ENCODE measurements at regions of chr7 and their contacts with region 1.

Region 1: DNA sequence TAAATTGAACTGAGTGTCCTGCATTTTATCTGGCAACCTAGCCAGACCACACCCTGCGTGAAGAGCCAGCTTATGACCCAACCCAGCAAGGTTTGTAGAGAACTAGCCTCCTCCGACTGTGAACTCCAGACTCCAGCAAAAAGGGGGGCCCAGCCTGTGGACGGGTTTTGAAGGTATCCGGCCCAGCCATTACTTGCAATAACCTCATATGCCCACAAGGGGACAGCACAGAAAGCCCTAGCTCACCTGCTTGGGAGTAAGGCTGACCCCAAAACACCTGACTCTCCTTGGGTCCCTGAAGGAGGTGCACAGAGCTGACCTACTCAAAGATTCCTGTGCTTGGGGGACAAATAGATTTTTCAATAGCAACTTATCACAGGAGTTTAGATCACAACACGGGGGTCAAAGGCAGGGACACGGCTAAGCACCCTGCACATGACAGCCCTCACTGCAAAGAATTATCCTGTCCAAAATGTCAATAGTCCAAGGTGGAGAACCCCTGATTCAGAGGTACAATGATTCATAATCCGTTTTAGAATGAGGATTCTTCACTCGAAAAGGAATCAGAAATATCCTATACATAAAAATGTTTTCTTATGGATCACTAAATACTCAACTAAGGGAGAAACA is 4.6 kb downstream of the TRPV6 start:
- DNase-seq: peak; percentile 42
- H3K4me3 ChIP-seq: no peak overlapping the region
- H3K27ac ChIP-seq: no peak overlapping the region
- H3K4me1 ChIP-seq: no peaks in the 10 kb centered on the region
- H3K27me3 ChIP-seq: peaks cover 0 to 2% of the 10 kb centered on the region in 2 experiments
- CTCF ChIP-seq: peak; percentile 76 to 83
- POLR2A ChIP-seq: no peak

Region 2: DNA sequence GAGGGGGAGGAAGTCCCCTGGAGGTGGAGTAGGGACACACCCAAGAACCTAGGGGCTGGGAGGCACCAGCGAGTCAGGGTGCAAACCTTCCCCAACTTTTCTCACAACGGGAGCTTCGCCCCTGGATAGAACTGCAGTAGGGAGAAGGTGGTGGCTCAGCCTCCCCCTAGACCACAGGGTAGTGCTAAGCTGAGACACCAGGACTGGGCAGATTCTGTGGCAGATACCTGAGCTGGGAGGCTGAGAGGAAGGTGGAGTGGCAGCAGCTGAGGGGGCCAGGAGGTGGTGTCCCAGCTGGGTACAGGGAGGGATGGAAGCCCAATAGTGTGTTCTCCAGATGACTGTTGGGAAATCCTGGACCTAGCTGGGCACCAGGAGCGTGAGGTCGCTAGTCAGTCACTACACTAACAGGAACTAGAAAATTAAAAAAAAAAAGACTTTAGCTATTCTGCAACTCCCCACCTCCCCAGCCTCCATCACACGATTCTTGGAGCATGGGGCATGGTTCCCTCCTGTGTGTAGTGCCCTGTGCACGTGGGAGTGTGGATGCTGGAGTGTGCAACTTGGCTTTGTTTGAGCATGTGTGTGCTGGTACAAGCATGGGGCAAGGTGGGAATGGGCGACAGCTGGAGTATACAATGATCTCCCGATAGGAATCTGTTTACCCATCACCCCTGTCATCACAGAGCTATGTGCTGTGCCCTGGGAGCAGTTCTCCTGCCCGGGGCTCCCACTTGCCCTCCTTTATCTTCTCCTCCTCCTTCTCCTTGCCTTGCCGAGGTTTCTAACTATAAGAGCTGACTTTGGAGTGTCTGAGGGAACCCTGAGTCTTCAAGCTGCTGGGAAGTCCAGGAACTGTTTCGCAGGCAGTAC is 13.4 kb after region 1 on chr7:
- CTCF ChIA-PET with region 1: interaction called, 10 read pairs
- POLR2A ChIA-PET with region 1: no interaction called
- dilution Hi-C with region 1: no loop called
- intact Hi-C with region 1: no loop called
- DNase-seq: no peak
- H3K4me3 ChIP-seq: no peak overlapping the region
- H3K27ac ChIP-seq: no peak overlapping the region
- H3K4me1 ChIP-seq: no peaks in the 10 kb centered on the region
- H3K27me3 ChIP-seq: peaks cover 0 to 2% of the 10 kb centered on the region in 2 experiments
- CTCF ChIP-seq: no peak
- POLR2A ChIP-seq: no peak

Region 3: GRCh38 chr7:142960955-142961512 is 80.0 kb after region 1 on chr7:
- CTCF ChIA-PET with region 1: interaction called, 4 read pairs
- POLR2A ChIA-PET with region 1: no interaction called
- dilution Hi-C with region 1: no loop called
- intact Hi-C with region 1: loop called (anchors 2 kb)
- DNase-seq: no peak
- H3K4me3 ChIP-seq: no peak overlapping the region
- H3K27ac ChIP-seq: no peak overlapping the region
- H3K4me1 ChIP-seq: no peaks in the 10 kb centered on the region
- H3K27me3 ChIP-seq: no peaks in the 10 kb centered on the region
- CTCF ChIP-seq: no peak
- POLR2A ChIP-seq: no peak

Region 4: DNA sequence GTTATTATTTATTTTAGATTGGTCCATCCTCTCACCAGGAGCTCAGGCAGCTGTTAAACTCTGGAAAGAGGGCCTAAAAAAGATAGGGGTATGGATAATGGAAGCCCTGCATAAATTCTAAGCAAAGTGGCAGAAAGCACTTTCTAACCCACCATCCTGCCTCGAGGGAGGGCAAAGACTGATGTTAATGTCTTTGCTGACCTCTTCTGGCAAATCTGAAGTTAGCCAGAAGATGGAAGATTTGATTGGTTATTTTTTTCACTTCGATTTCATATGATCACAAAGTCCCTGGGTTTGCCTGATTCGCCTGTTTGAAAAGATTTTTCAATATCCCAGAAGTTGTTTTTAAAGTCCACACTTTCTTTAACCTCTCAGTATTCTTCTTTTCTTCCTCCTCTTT is 121.1 kb after region 1 on chr7:
- CTCF ChIA-PET with region 1: interaction called, 38 read pairs
- POLR2A ChIA-PET with region 1: no interaction called
- dilution Hi-C with region 1: no loop called
- intact Hi-C with region 1: loop called (anchors 1 kb)
- DNase-seq: peak; percentile 26
- H3K4me3 ChIP-seq: no peak overlapping the region
- H3K27ac ChIP-seq: no peak overlapping the region
- H3K4me1 ChIP-seq: peaks cover 3% of the 10 kb centered on the region
- H3K27me3 ChIP-seq: peaks cover 15 to 18% of the 10 kb centered on the region in 2 experiments
- CTCF ChIP-seq: peak in 1 of 2 donors; percentile 15
- POLR2A ChIP-seq: no peak